Mammary epithelial cell (primary cell): ENCODE measurements at regions of chr18 and their contacts with region 1.

Region 1: GRCh38 chr18:50629148-50629631 is 69.3 kb downstream of the MAPK4 start:
- DNase-seq: peak; percentile 78
- H3K4me3 ChIP-seq: no peak overlapping the region
- H3K27ac ChIP-seq: no peak overlapping the region
- H3K4me1 ChIP-seq: peaks cover 46% of the 10 kb centered on the region
- H3K27me3 ChIP-seq: no peaks in the 10 kb centered on the region
- CTCF ChIP-seq: no peak

Region 2: GRCh38 chr18:50614838-50615237 is 14.4 kb before region 1 on chr18:
- CTCF ChIA-PET with region 1: no interaction called
- dilution Hi-C with region 1: no loop called
- in situ Hi-C with region 1: no loop called
- intact Hi-C with region 1: loop called (anchors 2 kb)
- DNase-seq: peak; percentile 99
- H3K4me3 ChIP-seq: no peak overlapping the region
- H3K27ac ChIP-seq: peak overlapping the region; percentile 70
- H3K4me1 ChIP-seq: peaks cover 11% of the 10 kb centered on the region
- H3K27me3 ChIP-seq: no peaks in the 10 kb centered on the region
- CTCF ChIP-seq: no peak

Region 3: DNA sequence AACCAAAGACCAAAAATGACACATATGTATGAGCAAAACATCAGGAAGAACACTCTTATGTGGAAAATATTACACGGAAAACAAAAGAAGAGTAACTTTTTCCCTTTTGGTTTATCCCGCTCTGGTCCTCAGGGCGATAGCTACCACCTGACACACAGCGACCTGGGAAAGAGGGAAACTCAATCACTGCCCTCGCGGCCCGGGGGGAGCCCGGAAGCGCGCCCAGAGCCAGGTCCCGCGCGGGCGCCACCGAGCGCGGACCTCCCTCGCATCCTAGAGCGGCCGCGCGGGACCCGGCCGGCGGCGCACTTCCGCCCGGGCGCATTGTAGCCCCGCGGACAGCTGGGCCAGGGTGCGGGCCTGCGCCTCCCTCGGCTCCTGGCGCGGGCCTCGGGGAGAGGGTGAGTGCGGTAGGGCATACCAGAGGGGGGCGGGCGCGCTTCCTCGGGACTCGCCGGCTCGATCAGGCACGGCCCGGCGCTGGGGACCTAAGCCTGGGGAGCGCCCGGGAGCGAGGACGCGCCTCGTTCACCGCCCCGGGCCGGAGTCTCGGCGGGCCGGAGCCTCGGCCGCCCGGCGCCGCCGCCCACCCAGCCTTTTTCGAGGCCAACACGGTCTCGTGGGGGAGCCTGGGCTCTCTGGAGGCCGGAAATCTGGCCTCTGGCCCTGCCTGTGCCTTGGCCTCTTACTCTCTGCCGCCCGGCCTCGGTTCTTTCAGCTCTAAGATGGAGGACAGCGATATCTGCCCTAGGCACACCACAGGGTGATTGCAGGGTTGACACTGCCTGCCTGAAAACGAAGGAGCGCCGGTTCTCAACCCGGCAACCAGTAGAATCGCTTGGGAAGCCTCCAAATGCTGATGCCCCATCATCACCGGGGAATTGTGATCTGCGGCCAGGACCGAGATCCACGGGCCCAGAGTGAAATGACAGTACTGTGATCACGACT is 338.8 kb after region 1 on chr18 and contains the start of gene ELAC1:
- CTCF ChIA-PET with region 1: no interaction called
- dilution Hi-C with region 1: no loop called
- in situ Hi-C with region 1: no loop called
- intact Hi-C with region 1: no loop called
- DNase-seq: peak; percentile 79
- H3K4me3 ChIP-seq: peak within 1 kb of the TSS; percentile 78 to 96 (median 91)
- H3K27ac ChIP-seq: peak within 1 kb of the TSS; percentile 91
- H3K4me1 ChIP-seq: peaks cover 16% of the 10 kb centered on the region
- H3K27me3 ChIP-seq: no peaks in the 10 kb centered on the region
- CTCF ChIP-seq: no peak
- total RNA-seq, gene ELAC1: 5.5 to 11.2 TPM